GM12878 (cell line): ENCODE measurements at regions of chr6 and their contacts with region 1.

Region 1: GRCh38 chr6:2111162-2111677 is 134.2 kb downstream of the GMDS start:
- DNase-seq: peak; percentile 27
- ATAC-seq: peak; percentile 92
- H3K4me3 ChIP-seq: peak overlapping the region; percentile 38; the same call in 1 of the 2 replicates
- H3K27ac ChIP-seq: peak overlapping the region; percentile 51; the same call in 1 of the 2 replicates
- H3K4me1 ChIP-seq: peaks cover 7% of the 10 kb centered on the region; the same call in 1 of the 2 replicates
- H3K27me3 ChIP-seq: no peaks in the 10 kb centered on the region
- CTCF ChIP-seq: no peak
- EP300 ChIP-seq: peak; percentile 78 to 90
- POLR2A ChIP-seq: no peak
- RAD21 ChIP-seq: no peak

Region 2: DNA sequence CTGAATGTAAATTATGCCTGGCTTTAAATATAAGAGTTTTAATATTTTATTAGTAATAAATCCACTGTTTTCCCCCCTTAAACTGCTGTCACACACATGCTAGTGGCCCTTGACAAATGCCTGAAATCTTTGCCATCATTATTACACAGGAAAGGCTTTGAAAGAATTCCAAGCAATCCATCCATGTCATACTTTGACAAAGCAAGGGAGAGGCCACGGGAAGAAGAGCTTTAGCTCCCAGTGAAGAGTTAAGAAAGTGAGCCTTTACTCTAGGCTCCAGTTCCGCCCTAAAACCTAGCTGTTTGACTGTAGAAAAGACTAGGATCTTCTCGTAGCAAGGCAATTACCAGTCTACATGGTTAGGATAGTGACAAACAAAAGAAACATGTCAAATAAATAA is 13.8 kb before region 1 on chr6:
- CTCF ChIA-PET with region 1: interaction called, 7 read pairs
- POLR2A ChIA-PET with region 1: no interaction called
- RAD21 ChIA-PET with region 1: no interaction called
- SMC1A ChIA-PET with region 1: interaction called, 11 read pairs
- in situ Hi-C with region 1: no loop called
- intact Hi-C with region 1: no loop called
- DNase-seq: no peak
- ATAC-seq: no peak
- H3K4me3 ChIP-seq: no peak overlapping the region
- H3K27ac ChIP-seq: no peak overlapping the region
- H3K4me1 ChIP-seq: no peaks in the 10 kb centered on the region
- H3K27me3 ChIP-seq: no peaks in the 10 kb centered on the region
- CTCF ChIP-seq: no peak
- EP300 ChIP-seq: no peak
- POLR2A ChIP-seq: no peak
- RAD21 ChIP-seq: no peak

Region 3: DNA sequence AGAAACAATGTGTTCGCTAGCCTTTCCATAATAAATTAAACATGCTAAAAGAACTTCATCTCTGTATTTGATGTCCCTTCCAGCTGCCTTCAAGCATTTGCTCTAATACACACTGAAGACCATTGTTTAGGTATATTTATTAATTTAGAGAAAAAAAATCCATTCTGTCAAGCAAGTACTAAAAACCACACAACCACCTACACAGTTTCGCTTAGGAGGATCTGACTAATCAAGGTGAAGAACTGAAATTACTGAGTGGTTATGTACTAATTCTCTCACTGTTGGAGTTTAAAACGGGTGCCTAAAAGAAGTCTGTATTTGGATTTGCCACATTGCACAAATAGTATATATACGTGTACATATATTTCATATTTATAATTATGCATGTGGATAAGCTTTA is 75.3 kb after region 1 on chr6:
- CTCF ChIA-PET with region 1: no interaction called
- POLR2A ChIA-PET with region 1: no interaction called
- RAD21 ChIA-PET with region 1: no interaction called
- SMC1A ChIA-PET with region 1: no interaction called
- in situ Hi-C with region 1: no loop called
- intact Hi-C with region 1: loop called (anchors 2 kb)
- DNase-seq: peak; percentile 27
- ATAC-seq: peak; percentile 94
- H3K4me3 ChIP-seq: no peak overlapping the region
- H3K27ac ChIP-seq: no peak overlapping the region
- H3K4me1 ChIP-seq: peaks cover 18% of the 10 kb centered on the region
- H3K27me3 ChIP-seq: no peaks in the 10 kb centered on the region
- CTCF ChIP-seq: no peak
- EP300 ChIP-seq: peak; percentile 22 to 82; a peak in 1 of 4 replicates
- POLR2A ChIP-seq: no peak
- RAD21 ChIP-seq: 0 out of 2 replicates have a peak, but pooled peaks have one; percentile 2

Region 4: GRCh38 chr6:2353412-2354137 is 242.4 kb after region 1 on chr6:
- CTCF ChIA-PET with region 1: interaction called, 33 read pairs
- POLR2A ChIA-PET with region 1: no interaction called
- RAD21 ChIA-PET with region 1: interaction called, 8 read pairs
- SMC1A ChIA-PET with region 1: interaction called, 9 read pairs
- in situ Hi-C with region 1: loop called (anchors 10 kb)
- intact Hi-C with region 1: no loop called
- DNase-seq: peak; percentile 8
- ATAC-seq: peak; percentile 73
- H3K4me3 ChIP-seq: no peak overlapping the region
- H3K27ac ChIP-seq: no peak overlapping the region
- H3K4me1 ChIP-seq: no peaks in the 10 kb centered on the region
- H3K27me3 ChIP-seq: no peaks in the 10 kb centered on the region
- CTCF ChIP-seq: peak; percentile 70 to 83 (median 78); a peak in 5 of 6 replicates
- EP300 ChIP-seq: no peak
- POLR2A ChIP-seq: no peak
- RAD21 ChIP-seq: peak; percentile 89